ENCODE measurements at regions of chr9 and their contacts with region 1.

Region 1: DNA sequence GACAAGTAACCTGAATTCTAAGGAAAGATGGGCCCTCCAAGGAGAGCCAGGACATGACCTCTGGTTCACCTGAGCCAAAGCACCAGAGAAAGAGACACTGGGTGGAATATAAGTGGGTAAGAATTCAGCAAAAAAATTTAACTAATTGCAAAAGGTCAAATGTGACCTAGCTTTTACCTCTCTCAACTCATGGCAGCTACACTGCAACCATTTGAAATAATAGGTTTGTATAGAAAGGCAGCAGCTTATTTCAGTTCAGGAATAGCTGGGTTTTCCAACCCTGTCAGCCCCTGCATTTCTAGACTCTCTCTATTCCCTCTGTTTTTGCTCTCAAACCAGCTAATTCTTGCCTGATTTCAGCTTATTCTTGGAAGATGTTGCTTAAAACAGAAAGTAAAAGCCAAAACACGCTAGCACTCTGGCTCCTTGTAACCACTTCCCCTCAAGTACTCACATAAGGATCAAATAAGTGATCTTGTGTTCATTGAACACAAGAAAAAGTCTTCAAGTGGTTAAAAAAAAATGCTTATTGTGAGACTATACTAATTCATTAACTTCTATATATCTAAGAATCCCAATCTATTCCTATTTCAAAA is 101.1 kb upstream of the NR4A3 start:
- DNase-seq: peak in 4 of 14 experiments; percentile 7 to 60 (median 44)
- ATAC-seq: no peak
- H3K4me3 ChIP-seq: peak overlapping the region; percentile 39
- H3K4me3 Mint-ChIP-seq: peak overlapping the region; percentile 86
- H3K27ac ChIP-seq: peak overlapping the region in 1 of 2 donors; percentile 71
- H3K27ac Mint-ChIP-seq: peak overlapping the region; percentile 88
- H3K4me1 ChIP-seq: peaks cover 3% of the 10 kb centered on the region
- H3K4me1 Mint-ChIP-seq: peaks cover 38% of the 10 kb centered on the region
- H3K27me3 ChIP-seq: no peaks in the 10 kb centered on the region
- H3K27me3 Mint-ChIP-seq: no peaks in the 10 kb centered on the region
- CTCF ChIP-seq: no peak

Region 2: GRCh38 chr9:99782962-99783718 is 62.6 kb after region 1 on chr9:
- CTCF ChIA-PET with region 1: no interaction called
- POLR2A ChIA-PET with region 1: no interaction called
- intact Hi-C with region 1: loop called in 1 of 2 experiments (anchors 10 kb)
- DNase-seq: peak in 1 of 14 experiments; percentile 4
- ATAC-seq: no peak
- H3K4me3 ChIP-seq: no peak overlapping the region
- H3K4me3 Mint-ChIP-seq: no peak overlapping the region
- H3K27ac ChIP-seq: no peak overlapping the region
- H3K27ac Mint-ChIP-seq: no peak overlapping the region
- H3K4me1 ChIP-seq: no peaks in the 10 kb centered on the region
- H3K4me1 Mint-ChIP-seq: no peaks in the 10 kb centered on the region
- H3K27me3 ChIP-seq: peaks cover 5 to 21% of the 10 kb centered on the region in 2 experiments
- H3K27me3 Mint-ChIP-seq: peaks cover 26% of the 10 kb centered on the region
- CTCF ChIP-seq: no peak

Measured in CD4-positive, alpha-beta T cell (primary cell).